PC-3 (cell line): ENCODE measurements at regions of chr15 and their contacts with region 1.

Region 1: DNA sequence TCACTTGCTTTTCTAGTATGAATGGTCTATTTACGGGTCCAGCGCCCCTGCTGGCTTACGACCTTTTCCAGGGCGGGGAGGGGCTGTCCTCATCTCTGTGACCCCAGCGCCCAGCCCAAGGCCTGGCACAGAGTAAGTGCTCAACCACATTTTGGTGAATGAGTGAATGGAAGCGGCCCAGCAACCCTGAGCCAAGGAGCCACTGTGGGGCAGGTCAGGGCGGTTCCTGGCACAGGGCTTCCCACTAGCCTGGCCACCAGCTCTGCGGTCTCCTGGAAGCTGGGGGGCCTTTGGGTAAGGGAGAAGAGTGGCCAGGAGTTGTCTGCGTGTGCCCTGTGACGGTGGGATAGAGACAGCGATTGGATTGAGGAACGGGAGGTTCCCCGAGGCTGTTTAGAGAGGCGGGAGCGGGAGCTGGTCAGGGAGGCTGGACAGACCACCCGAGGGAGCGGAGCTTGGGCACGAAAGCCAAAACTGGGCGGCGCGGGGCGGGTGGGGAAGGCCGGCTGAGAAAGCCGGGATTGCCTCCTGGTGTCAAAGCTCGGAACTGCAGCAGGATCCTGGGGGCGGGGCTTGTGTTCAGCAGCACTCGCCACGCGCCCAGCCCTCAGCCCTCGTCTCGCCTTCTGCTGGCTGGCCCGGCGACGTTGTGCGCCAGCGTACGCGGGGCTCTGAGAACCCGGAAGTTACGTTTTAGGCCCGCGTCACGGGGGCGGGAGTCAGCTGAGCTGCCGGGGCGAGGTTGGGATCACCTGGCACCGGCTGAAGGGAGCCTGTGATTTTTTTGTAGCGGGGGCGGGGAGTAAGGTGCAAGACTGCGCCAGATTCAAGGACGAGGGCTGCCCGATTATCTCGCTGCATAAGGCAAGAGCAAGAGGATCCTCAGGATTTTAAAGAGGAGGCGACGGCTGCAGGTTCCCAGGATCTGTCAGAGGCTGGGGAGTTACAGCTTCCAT is at the start of gene VPS18:
- DNase-seq: peak; percentile 99
- ATAC-seq: peak; percentile 92
- H3K4me3 ChIP-seq: peak within 1 kb of the TSS; percentile 87
- H3K27ac ChIP-seq: peak within 1 kb of the TSS; percentile 81
- H3K4me1 ChIP-seq: peaks cover 16% of the 10 kb centered on the region
- H3K27me3 ChIP-seq: no peaks in the 10 kb centered on the region
- CTCF ChIP-seq: peak; percentile 74
- total RNA-seq, gene VPS18: 37.6 and 39.5 TPM in 2 replicates

Region 2: DNA sequence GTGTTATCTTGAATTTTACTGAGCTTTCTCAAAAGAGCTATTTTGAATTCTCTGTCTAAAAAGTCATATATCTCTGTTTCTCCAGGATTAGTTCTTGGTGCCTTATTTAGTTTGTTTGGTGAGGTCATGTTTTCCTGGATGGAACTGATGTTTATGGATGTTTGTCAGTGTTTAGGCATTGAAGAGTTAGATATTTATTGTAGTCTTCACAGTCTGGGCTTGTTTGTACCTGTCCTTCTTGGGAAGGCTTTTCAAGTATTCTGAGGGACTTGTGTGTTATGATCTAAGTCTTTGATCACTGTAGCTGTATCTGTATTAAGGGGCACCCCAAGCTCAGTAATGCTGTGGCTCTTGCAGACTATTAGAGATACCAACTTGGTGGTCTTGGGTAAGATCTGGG is 209.6 kb before region 1 on chr15:
- CTCF ChIA-PET with region 1: no interaction called
- POLR2A ChIA-PET with region 1: no interaction called
- intact Hi-C with region 1: loop called (anchors 1 kb)
- DNase-seq: no peak
- ATAC-seq: no peak
- H3K4me3 ChIP-seq: no peak overlapping the region
- H3K27ac ChIP-seq: no peak overlapping the region
- H3K4me1 ChIP-seq: 0 out of 2 replicates have a peak, but pooled peaks cover under 1% of the 10 kb centered on the region
- H3K27me3 ChIP-seq: no peaks in the 10 kb centered on the region
- CTCF ChIP-seq: no peak

Region 3: GRCh38 chr15:40746916-40747514 is 147.0 kb before region 1 on chr15:
- CTCF ChIA-PET with region 1: interaction called, 8 read pairs
- POLR2A ChIA-PET with region 1: no interaction called
- intact Hi-C with region 1: loop called (anchors 2 kb)
- DNase-seq: no peak
- ATAC-seq: no peak
- H3K4me3 ChIP-seq: no peak overlapping the region
- H3K27ac ChIP-seq: no peak overlapping the region
- H3K4me1 ChIP-seq: peaks cover 5% of the 10 kb centered on the region
- H3K27me3 ChIP-seq: no peaks in the 10 kb centered on the region
- CTCF ChIP-seq: no peak

Region 4: GRCh38 chr15:40782580-40783227 is 111.3 kb before region 1 on chr15:
- CTCF ChIA-PET with region 1: interaction called, 24 read pairs
- POLR2A ChIA-PET with region 1: no interaction called
- intact Hi-C with region 1: loop called (anchors 5 kb)
- DNase-seq: peak; percentile 90
- ATAC-seq: peak; percentile 90
- H3K4me3 ChIP-seq: no peak overlapping the region
- H3K27ac ChIP-seq: no peak overlapping the region
- H3K4me1 ChIP-seq: peaks cover 28% of the 10 kb centered on the region
- H3K27me3 ChIP-seq: no peaks in the 10 kb centered on the region
- CTCF ChIP-seq: peak; percentile 93

Region 5: DNA sequence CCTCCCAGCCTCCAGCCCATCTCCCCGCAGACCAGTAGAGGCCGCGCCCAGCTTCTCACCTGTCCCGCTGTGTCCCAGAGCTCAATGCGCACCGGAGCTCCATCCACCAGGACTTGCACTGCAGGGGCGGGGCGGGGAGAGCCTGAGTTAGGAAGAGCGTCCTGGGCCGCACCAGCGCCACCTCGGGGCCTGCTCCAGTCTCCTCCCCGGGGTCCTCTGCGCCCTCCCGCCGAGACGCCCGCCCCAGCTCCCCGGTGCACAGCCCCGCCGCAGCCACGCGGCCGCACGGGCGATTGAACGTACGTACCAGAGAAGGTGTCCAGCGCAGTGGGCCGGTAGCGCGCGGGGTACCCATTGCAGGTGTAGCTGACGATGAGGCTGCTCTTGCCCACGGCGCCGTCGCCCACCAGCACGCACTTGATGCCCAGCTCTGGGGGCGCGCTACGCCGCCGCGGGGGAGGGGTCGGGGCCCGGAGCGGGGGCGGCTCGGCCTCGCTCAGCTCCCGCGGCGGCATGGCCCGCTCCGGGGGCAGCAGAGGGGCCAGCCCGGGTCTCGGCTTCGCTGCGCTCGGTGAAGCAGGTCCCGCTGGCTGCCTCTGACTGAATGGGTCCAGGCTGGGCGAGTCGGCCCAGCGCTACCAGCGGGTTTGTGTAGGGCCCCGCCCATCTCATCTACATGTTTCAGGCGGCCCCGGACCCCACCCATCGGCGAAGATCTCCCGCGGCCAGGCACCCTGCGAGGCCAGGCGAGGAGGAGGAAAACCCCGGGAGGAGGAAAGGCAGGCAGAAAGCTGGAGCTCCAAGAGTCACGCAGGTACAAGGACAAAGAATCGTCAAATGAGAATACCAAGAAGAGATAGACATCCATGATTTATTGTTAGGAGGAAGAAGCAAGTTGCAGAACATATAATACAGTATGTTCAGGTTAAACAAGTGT is 20.1 kb before region 1 on chr15 and contains the start of gene RHOV:
- CTCF ChIA-PET with region 1: interaction called, 38 read pairs
- POLR2A ChIA-PET with region 1: interaction called, 3 read pairs
- intact Hi-C with region 1: loop called (anchors 2 kb)
- DNase-seq: peak; percentile 89
- ATAC-seq: peak; percentile 90
- H3K4me3 ChIP-seq: peak within 1 kb of the TSS; percentile 92
- H3K27ac ChIP-seq: peak within 1 kb of the TSS; percentile 95
- H3K4me1 ChIP-seq: peaks cover 36% of the 10 kb centered on the region
- H3K27me3 ChIP-seq: no peaks in the 10 kb centered on the region
- CTCF ChIP-seq: peak; percentile 63
- total RNA-seq, gene RHOV: 39.5 and 52.2 TPM in 2 replicates